H1 (cell line): ENCODE measurements at regions of chr1 and their contacts with region 1.

Region 1: DNA sequence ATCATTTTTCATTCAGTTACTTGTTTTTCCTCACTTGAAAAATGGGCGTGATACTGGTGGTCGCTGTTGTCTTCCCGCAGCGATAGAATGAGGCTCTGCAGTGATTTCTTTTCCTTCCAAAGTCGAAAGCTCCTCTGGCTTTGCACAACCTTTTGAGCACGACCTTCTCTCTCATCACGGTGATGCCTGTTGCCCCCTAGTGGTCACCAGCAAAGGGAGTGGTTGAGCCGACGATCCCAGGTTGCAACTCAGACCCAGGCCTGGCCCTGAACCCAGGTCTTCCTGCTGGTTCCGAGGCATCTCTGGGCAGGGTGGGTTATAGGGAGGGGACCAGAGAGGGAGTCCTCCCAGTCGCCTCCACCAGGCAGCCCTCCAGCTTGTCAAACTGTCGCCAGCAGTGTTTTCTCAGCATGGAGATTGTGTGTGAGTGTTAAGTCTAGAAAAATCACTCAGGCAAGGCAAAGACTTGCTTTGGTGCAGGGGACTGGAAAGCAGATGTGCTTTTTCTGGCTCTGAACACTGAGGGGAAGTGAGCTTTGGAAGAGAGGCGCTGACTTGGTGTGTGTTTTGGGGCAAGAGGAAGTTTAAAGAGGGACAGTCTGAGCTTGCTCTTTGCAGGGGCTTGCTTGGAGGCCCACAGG is 285.3 kb downstream of the CAMTA1 start:
- DNase-seq: peak; percentile 60 to 81
- H3K4me3 ChIP-seq: peak overlapping the region; percentile 17 to 64 (median 56); a peak in 7 of 8 replicates
- H3K27ac ChIP-seq: no peak overlapping the region
- H3K4me1 ChIP-seq: peaks cover 0 to 3% (median 2%) of the 10 kb centered on the region in 4 experiments; a peak in 3 of 7 replicates
- H3K27me3 ChIP-seq: peaks cover 0 to 5% (median 1%) of the 10 kb centered on the region in 4 experiments; a peak in 1 of 7 replicates
- CTCF ChIP-seq: peak; percentile 83 to 98 (median 97)
- EP300 ChIP-seq: no peak
- POLR2A ChIP-seq: no peak
- RAD21 ChIP-seq: peak; percentile 79 to 88

Region 2: DNA sequence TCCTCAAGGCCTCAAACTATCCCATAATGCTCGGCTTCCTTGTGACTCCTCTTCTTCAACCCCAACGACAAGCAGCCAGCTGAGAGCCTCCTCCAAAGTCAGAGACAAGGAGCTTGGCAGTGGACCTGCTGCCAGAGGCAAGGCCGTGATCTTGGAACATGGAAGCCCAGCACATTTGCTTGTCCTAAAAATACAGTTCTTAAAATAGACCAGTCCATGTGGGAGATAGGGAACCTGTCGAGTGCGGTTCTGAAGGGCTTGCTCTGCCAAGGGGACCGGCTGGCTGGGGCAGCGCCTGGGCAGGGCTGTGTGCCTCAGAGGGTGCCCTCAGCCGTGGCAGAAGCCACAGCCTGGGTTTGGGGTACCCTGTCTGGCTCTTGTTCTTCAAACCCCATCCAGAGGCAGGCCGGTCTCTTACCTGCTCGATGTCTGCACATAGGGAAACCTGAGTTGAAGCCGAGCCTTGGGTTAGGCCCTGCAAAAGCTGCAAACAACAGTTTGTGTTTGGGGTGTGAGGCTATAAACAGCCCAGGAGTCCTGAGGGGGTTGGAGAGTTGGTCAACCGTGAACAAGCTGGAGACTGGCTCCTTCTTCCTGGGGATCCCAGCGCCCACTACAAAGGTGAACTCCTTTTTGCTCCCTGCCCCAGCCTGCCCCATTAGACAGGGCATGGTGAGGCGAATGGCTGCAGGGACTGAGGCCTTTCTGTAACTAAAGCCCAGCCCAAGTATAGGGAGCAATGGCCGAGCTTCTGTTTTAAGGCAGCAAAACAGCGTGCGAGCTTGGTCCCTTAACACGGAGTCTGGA is 56.5 kb before region 1 on chr1:
- CTCF ChIA-PET with region 1: interaction called, 10 read pairs
- POLR2A ChIA-PET with region 1: no interaction called
- DNase-seq: no peak
- H3K4me3 ChIP-seq: no peak overlapping the region
- H3K27ac ChIP-seq: no peak overlapping the region
- H3K4me1 ChIP-seq: no peaks in the 10 kb centered on the region
- H3K27me3 ChIP-seq: no peaks in the 10 kb centered on the region
- CTCF ChIP-seq: no peak
- EP300 ChIP-seq: no peak
- POLR2A ChIP-seq: no peak
- RAD21 ChIP-seq: no peak

Region 3: GRCh38 chr1:7050751-7051668 is 19.5 kb before region 1 on chr1:
- CTCF ChIA-PET with region 1: interaction called, 107 read pairs
- POLR2A ChIA-PET with region 1: no interaction called
- DNase-seq: no peak
- H3K4me3 ChIP-seq: no peak overlapping the region
- H3K27ac ChIP-seq: no peak overlapping the region
- H3K4me1 ChIP-seq: no peaks in the 10 kb centered on the region; a peak in 1 of 7 replicates
- H3K27me3 ChIP-seq: no peaks in the 10 kb centered on the region
- CTCF ChIP-seq: no peak
- EP300 ChIP-seq: no peak
- POLR2A ChIP-seq: no peak
- RAD21 ChIP-seq: no peak

Region 4: GRCh38 chr1:7084232-7084894 is 13.9 kb after region 1 on chr1:
- CTCF ChIA-PET with region 1: interaction called, 14 read pairs
- POLR2A ChIA-PET with region 1: interaction called, 4 read pairs
- DNase-seq: no peak
- H3K4me3 ChIP-seq: no peak overlapping the region
- H3K27ac ChIP-seq: no peak overlapping the region
- H3K4me1 ChIP-seq: peaks cover 0 to 4% (median 0%) of the 10 kb centered on the region in 4 experiments; a peak in 2 of 7 replicates
- H3K27me3 ChIP-seq: no peaks in the 10 kb centered on the region
- CTCF ChIP-seq: peak; percentile 28 to 49 (median 42); a peak in 3 of 4 replicates
- EP300 ChIP-seq: no peak
- POLR2A ChIP-seq: no peak
- RAD21 ChIP-seq: no peak; a peak in 2 of 4 replicates

Region 5: GRCh38 chr1:7097938-7098592 is 27.6 kb after region 1 on chr1:
- CTCF ChIA-PET with region 1: interaction called, 11 read pairs
- POLR2A ChIA-PET with region 1: interaction called, 3 read pairs
- DNase-seq: no peak
- H3K4me3 ChIP-seq: no peak overlapping the region
- H3K27ac ChIP-seq: no peak overlapping the region
- H3K4me1 ChIP-seq: no peaks in the 10 kb centered on the region; a peak in 1 of 7 replicates
- H3K27me3 ChIP-seq: no peaks in the 10 kb centered on the region
- CTCF ChIP-seq: no peak
- EP300 ChIP-seq: no peak
- POLR2A ChIP-seq: no peak
- RAD21 ChIP-seq: no peak

Region 6: DNA sequence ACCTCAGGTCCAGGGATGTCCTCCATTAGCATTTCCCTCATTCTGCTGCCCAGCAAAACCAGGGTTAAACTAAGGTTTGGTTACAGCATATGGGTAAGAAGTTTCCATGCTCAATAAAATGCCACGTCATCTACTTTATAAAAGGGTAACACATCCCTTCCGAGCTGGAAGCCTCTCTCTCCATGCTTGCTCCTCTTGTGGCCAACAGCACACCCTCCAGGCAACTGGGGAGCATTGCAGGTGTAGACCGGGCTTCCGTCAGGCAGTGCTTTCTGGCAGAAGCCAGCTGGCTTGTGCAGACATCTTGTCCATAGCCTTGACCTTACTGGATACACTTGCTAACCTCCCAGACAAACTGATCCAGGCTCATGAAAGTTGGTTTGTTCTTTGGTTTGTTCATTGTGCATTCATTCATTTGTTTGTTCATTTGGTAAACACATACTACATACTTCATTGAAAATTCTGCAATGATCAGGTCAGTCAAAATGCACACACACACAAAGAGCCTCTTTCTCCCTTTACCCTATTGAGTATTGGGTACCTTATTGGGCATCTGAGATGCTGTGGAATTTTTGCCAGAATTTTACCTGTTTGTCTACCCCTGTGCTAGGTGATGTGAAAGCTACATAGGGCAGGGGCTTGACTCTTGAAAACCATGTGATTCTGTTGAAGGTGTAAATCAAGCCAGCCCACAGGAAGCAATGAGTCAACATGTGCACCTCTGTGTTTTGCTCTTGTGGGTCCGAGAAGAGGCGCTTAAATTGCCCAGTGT is 137.6 kb after region 1 on chr1:
- CTCF ChIA-PET with region 1: interaction called, 26 read pairs
- POLR2A ChIA-PET with region 1: no interaction called
- DNase-seq: peak; percentile 59 to 86
- H3K4me3 ChIP-seq: no peak overlapping the region
- H3K27ac ChIP-seq: no peak overlapping the region
- H3K4me1 ChIP-seq: peaks cover 0 to 2% (median 0%) of the 10 kb centered on the region in 4 experiments; a peak in 1 of 7 replicates
- H3K27me3 ChIP-seq: no peaks in the 10 kb centered on the region
- CTCF ChIP-seq: peak; percentile 95 to 99 (median 97)
- EP300 ChIP-seq: no peak
- POLR2A ChIP-seq: no peak
- RAD21 ChIP-seq: peak; percentile 99